ENCODE measurements at regions of chr10 and their contacts with region 1.

Region 1: DNA sequence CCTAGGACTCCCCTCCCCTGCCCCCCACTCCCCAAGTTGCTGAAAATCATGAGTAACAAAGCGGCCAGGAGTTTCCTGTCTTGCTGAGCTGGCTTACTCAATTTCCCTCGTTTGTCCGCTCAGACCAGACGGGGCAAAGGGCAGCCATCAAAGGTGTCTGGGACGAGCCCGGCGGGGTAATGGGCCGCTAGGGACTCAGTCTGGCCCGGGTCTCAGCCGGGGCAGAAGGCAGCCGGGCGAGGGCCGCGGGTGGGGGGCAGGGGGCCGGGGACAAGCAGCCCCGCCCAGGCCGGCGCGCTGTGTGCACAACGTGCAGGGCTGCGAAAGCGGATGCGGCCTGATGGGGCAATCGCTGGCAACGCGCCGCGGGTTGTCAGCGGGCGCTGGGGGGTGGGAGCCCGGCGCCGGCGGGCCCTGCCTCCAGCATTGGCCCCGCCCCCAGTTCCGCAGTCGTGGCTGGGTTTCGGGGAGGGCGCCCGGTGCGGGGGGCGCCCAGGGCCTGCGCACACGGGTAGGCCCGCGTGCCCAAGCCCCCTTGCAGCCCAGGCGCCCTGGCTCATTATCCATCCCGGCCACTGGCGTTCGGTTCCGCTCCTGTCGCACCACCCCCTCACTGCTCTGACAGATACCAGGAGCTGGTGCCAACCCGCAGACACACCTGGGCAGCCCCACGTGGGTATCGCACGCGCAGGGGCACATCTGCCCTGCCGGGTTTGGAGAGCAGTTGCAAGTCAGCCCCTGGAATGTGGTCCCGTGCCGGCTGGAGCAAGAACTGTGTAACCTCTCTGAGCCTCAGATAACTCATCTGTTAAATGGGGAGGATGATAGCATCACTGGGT is 35.1 kb downstream of the DNAJB12 start:
- DNase-seq: peak; percentile 93
- ATAC-seq: peak; percentile 86
- H3K4me3 Mint-ChIP-seq: peak overlapping the region; percentile 81
- H3K27ac Mint-ChIP-seq: peak overlapping the region; percentile 100
- H3K4me1 Mint-ChIP-seq: peaks cover 79% of the 10 kb centered on the region
- H3K27me3 Mint-ChIP-seq: no peaks in the 10 kb centered on the region

Region 2: GRCh38 chr10:72297968-72298773 is 21.5 kb before region 1 on chr10:
- CTCF ChIA-PET with region 1: interaction called, 24 read pairs
- DNase-seq: peak; percentile 98
- ATAC-seq: peak; percentile 81
- H3K4me3 Mint-ChIP-seq: peak overlapping the region; percentile 77
- H3K27ac Mint-ChIP-seq: peak overlapping the region; percentile 99
- H3K4me1 Mint-ChIP-seq: peaks cover 59% of the 10 kb centered on the region
- H3K27me3 Mint-ChIP-seq: no peaks in the 10 kb centered on the region

Region 3: DNA sequence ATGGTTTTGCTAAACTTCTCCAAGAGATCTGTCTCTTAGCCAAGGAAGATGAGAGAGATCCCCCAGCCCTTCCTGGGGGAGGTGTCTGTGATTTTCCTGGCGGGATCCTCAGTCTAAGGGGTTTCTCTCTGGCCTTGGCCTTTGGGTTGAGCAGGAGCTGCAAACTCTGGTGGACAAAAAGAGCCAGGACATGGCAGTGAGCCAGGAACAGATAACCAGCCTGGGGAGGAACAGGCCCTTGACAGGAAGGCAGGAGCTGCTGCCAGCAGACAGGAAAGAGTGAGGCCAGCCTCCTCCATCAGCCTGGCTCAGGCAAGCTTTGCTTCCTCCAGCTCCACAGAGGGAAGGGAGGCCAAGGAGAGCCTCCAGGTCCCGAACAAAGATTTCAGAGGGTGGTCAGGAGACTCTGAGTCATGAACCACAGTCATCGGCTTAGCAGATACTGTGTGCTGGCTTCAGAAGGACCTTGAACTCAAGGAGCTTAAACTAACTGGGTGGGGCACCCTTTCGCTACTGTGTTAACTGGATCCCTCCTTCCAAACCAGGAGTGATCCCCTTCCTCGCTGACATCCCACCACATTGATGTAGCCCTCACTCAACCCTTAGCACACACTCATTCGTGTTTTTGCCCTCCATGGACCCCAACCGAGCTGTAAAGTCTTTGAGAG is 11.2 kb before region 1 on chr10:
- CTCF ChIA-PET with region 1: interaction called, 24 read pairs
- DNase-seq: peak; percentile 53
- ATAC-seq: peak; percentile 57
- H3K4me3 Mint-ChIP-seq: no peak overlapping the region
- H3K27ac Mint-ChIP-seq: peak overlapping the region; percentile 76
- H3K4me1 Mint-ChIP-seq: peaks cover 64% of the 10 kb centered on the region
- H3K27me3 Mint-ChIP-seq: no peaks in the 10 kb centered on the region

Region 4: DNA sequence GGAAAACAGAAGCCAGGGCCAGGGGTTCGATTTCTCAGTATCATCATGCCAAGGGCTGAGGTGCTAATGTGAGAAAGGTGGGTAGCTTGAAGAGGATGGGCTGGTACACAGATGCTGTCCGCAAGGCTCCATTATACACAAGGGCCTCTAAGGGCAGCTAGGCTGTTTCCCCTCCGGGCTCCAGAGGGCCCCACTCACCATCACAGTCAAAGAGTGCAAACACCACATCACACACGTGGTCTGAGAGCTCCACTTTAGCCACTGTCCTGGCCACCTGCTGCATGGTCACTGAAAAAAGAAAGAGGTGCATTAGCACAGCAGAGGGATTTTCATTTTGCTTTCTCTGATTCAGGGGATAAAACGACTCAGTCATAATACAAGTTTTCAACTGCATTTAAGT is 56.0 kb after region 1 on chr10:
- CTCF ChIA-PET with region 1: no interaction called
- DNase-seq: no peak
- ATAC-seq: no peak
- H3K4me3 Mint-ChIP-seq: no peak overlapping the region
- H3K27ac Mint-ChIP-seq: no peak overlapping the region
- H3K4me1 Mint-ChIP-seq: peaks cover 20% of the 10 kb centered on the region
- H3K27me3 Mint-ChIP-seq: no peaks in the 10 kb centered on the region

Measured in activated CD8-positive, alpha-beta memory T cell treated with anti-CD3 and anti-CD28 coated beads, Interleukin-2, amount 10 ng/mL, durations not matched to agents 7 days and 5 days (primary cell).